AG04450 (cell line): ENCODE measurements at regions of chr20 and their contacts with region 1.

Region 1: GRCh38 chr20:44388466-44389023 is 33.0 kb downstream of the HNF4A start:
- DNase-seq: peak; percentile 21
- H3K4me3 ChIP-seq: no peak overlapping the region
- H3K27ac ChIP-seq: no peak overlapping the region
- H3K27me3 ChIP-seq: peaks cover 19% of the 10 kb centered on the region
- CTCF ChIP-seq: peak; percentile 81

Region 2: GRCh38 chr20:43853174-43853803 is 535.3 kb before region 1 on chr20:
- CTCF ChIA-PET with region 1: no interaction called
- POLR2A ChIA-PET with region 1: no interaction called
- DNase-seq: no peak
- H3K4me3 ChIP-seq: no peak overlapping the region
- H3K27ac ChIP-seq: no peak overlapping the region
- H3K27me3 ChIP-seq: no peaks in the 10 kb centered on the region
- CTCF ChIP-seq: no peak

Region 3: GRCh38 chr20:44442298-44443070 is 53.9 kb after region 1 on chr20:
- CTCF ChIA-PET with region 1: no interaction called
- POLR2A ChIA-PET with region 1: no interaction called
- DNase-seq: no peak
- H3K4me3 ChIP-seq: no peak overlapping the region
- H3K27ac ChIP-seq: no peak overlapping the region
- H3K27me3 ChIP-seq: no peaks in the 10 kb centered on the region
- CTCF ChIP-seq: no peak

Region 4: DNA sequence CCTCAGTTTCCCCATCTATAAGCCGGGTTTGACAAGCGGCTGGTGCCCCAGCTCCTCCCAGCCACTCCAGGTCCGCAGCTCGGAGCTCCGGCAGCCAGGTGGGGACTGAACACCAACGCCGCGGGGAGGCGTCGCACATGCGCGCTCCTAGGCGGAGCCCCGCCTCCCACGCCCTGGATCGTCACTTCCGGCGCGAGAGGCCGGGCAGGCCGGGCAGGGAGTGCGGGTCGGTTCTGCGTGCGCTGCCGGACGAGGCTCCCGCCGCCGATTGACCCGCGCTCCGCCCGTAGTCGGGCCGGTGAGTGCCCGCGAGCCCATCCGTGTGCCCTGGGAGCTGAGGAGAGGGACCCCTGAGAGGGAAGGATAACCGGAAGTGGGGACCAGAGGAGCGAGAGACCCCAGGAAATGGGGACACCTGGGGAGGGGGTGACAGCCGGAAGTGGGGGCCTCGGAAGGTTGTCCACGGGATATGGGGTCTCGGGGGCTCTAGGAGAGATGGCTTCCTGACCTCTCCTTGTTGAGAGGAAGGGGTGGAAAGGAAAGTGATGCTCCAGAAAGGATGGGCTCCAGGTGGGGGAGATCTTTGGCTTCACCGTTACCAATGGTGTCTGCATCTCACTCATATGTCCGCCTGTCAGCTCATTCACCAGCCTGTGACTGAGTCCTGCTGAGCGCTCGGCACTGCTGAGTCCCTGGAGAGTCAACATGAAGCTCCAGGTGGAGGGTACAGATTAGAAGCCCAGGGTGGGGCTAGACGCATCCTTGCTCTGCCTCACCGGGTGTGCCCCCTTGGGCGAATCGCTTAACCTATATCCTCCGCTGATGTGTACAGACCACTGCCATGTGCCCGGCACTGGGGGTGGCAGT is 87.4 kb after region 1 on chr20 and contains the start of gene TTPAL:
- CTCF ChIA-PET with region 1: interaction called, 21 read pairs
- POLR2A ChIA-PET with region 1: no interaction called
- DNase-seq: peak; percentile 44
- H3K4me3 ChIP-seq: peak within 1 kb of the TSS; percentile 96
- H3K27ac ChIP-seq: peak within 1 kb of the TSS; percentile 61
- H3K27me3 ChIP-seq: no peaks in the 10 kb centered on the region
- CTCF ChIP-seq: peak; percentile 36; the same call in 1 of the 2 replicates
- polyA plus RNA-seq, gene TTPAL: 11.2 and 12.6 TPM in 2 replicates